Activated CD4-positive, alpha-beta memory T cell treated with anti-CD3 and anti-CD28 coated beads, Interleukin-2, amount 10 ng/mL, durations not matched to agents 7 days and 5 days (primary cell): ENCODE measurements at regions of chrX and their contacts with region 1.

Region 1: GRCh38 chrX:71283403-71284143 is at the start of gene NONO:
- DNase-seq: peak; percentile 86
- H3K4me3 Mint-ChIP-seq: peak within 1 kb of the TSS; percentile 97
- H3K27ac Mint-ChIP-seq: peak within 1 kb of the TSS; percentile 99
- H3K4me1 Mint-ChIP-seq: peaks cover 16% of the 10 kb centered on the region
- H3K27me3 Mint-ChIP-seq: peaks cover 4% of the 10 kb centered on the region
- total RNA-seq, gene NONO: 376 to 400 TPM

Region 2: DNA sequence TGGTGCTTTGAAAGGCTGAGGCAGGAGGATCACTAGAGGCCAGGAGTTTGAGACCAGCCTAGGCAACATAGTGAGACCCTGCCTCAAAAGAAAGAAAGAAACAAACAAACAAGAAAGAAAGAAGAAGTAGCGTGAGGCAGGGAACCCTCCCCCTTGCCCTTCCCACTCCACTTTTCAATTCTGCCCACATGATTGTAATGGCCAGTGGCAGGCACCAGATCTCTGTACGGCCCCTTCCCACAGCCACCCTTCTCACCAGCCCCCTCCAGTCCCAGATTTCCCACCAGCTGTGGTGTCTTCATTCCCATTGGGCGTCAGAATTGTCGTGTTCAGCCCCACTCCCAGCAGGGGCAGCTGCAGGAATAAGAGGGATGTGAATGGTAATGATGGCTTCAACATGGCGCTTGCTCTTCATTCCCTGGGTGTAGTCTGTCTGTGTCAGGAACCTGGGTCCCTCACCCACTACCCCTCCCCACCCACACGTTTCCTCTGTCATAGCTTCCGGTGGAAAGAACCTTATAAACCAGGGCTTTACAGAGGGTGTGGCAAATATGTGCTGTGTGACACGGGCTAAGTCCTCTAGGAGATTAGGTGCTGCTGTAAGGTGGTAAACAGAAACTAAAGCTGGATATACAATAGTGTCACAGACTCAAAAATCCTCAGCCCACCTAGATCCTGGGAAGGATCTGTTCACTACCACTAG is 172.3 kb before region 1 on chrX and contains the start of gene IL2RG:
- CTCF ChIA-PET with region 1: interaction called, 4 read pairs
- POLR2A ChIA-PET with region 1: interaction called, 14 read pairs
- DNase-seq: peak; percentile 83
- H3K4me3 Mint-ChIP-seq: peak within 1 kb of the TSS; percentile 98
- H3K27ac Mint-ChIP-seq: peak within 1 kb of the TSS; percentile 99
- H3K4me1 Mint-ChIP-seq: peaks cover 39% of the 10 kb centered on the region
- H3K27me3 Mint-ChIP-seq: no peaks in the 10 kb centered on the region
- total RNA-seq, gene IL2RG: 633 to 637 TPM

Region 3: GRCh38 chrX:71198066-71198465 is 85.5 kb before region 1 on chrX:
- CTCF ChIA-PET with region 1: interaction called, 4 read pairs
- POLR2A ChIA-PET with region 1: interaction called, 35 read pairs
- DNase-seq: peak; percentile 17
- H3K4me3 Mint-ChIP-seq: peak overlapping the region; percentile 94
- H3K27ac Mint-ChIP-seq: peak overlapping the region; percentile 89
- H3K4me1 Mint-ChIP-seq: peaks cover 25% of the 10 kb centered on the region
- H3K27me3 Mint-ChIP-seq: no peaks in the 10 kb centered on the region

Region 4: DNA sequence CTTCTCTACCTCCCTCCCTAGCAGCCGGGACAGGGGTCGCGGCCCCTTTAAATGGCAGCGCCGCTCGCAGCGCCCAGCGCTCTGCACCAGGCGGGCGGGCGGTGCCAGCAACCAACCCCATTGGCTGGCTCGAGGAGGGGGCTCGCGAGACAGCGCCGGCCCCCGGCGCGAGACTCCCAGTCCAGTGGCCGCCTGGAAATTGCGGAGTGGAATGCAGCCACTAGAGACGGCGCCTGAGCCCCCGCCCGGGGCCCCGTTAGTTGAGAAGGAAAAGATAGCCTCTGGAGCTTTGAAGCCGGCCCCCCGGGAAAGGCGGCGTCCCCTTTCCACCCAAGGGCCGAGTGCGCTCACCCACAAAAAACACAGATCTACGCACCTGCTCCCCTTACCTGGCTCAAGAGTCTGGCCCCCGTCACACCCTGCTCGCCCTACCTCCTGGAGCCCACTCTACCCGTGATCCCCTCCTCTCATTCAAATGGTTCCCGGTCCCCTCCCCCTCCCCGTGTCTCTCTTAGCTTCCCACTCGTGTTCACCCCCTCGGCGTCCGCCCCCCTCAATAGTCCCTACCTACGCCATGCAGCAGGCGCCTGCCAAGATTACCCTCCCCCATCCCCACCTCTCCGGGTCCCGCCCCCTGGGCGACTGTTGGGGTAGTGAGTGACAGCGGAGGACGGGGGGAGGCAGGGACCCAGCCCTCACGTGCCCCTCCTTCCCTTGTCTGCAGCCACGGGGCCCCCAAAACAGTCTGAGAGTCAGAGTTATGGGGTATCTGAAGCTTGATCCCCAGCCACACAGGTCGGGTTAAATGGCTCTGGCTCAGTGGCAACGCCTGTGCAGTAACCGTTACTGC is 29.3 kb before region 1 on chrX and contains the start of gene ZMYM3:
- CTCF ChIA-PET with region 1: interaction called, 5 read pairs
- POLR2A ChIA-PET with region 1: interaction called, 21 read pairs
- DNase-seq: peak; percentile 82
- H3K4me3 Mint-ChIP-seq: peak within 1 kb of the TSS; percentile 89
- H3K27ac Mint-ChIP-seq: peak within 1 kb of the TSS; percentile 75
- H3K4me1 Mint-ChIP-seq: peaks cover 33% of the 10 kb centered on the region
- H3K27me3 Mint-ChIP-seq: no peaks in the 10 kb centered on the region
- total RNA-seq, gene ZMYM3: 21.5 to 22.2 TPM